SK-N-SH (cell line): ENCODE measurements at regions of chr19 and their contacts with region 1.

Region 1: DNA sequence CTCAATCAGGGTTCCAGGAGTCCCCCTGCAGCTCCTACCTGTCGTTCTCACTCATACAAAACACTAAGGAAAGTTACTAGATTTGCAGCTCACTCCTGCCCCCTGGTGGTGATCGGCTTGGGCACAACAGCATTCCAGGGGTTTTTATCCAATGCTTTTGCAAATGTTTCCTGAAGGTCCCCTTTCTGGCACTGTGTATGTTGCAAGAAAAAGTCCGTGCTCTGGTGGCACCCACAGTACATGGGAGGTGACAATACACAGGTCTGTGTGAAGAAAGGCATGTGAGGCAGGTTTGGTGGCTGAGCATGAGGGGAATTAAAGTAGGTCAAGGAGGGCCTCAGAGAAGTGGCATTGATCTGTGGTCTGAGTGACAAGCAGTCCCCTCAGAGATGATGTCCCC is 8.6 kb upstream of the TYK2 start:
- DNase-seq: peak; percentile 76
- H3K4me3 ChIP-seq: peak overlapping the region in 1 of 2 experiments; percentile 36; a peak in 1 of 4 replicates
- H3K27ac ChIP-seq: no peak overlapping the region
- H3K4me1 ChIP-seq: no peaks in the 10 kb centered on the region
- H3K27me3 ChIP-seq: no peaks in the 10 kb centered on the region
- CTCF ChIP-seq: peak; percentile 96
- EP300 ChIP-seq: no peak
- RAD21 ChIP-seq: peak; percentile 84

Region 2: DNA sequence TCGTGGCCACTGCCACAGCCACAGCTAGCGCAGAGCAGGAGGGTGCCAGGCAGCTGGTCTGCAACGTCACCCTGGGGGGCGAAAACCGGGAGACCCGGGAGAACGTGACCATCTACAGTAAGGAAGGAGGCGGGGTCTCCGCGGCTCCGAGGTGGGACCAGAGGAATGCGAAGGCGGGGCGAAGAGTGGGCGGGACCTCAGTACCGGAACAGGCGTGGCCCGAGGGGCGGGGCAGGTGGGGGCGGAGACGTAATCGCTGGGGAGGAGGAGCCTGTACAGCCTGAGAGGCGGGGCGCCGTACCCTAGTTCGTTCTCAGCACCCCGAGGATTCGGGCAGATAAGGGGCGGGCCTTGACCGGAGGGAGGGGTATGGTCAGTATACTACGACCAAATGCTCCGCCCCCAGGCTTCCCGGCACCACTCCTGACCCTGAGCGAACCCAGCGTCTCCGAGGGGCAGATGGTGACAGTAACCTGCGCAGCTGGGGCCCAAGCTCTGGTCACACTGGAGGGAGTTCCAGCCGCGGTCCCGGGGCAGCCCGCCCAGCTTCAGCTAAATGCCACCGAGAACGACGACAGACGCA is 96.7 kb before region 1 on chr19:
- CTCF ChIA-PET with region 1: interaction called, 33 read pairs
- POLR2A ChIA-PET with region 1: no interaction called
- DNase-seq: peak; percentile 92
- H3K4me3 ChIP-seq: peak overlapping the region; percentile 45 to 77
- H3K27ac ChIP-seq: no peak overlapping the region
- H3K4me1 ChIP-seq: peaks cover 0 to 39% of the 10 kb centered on the region in 2 experiments; a peak in 1 of 4 replicates
- H3K27me3 ChIP-seq: no peaks in the 10 kb centered on the region; the same call in 1 of the 2 replicates
- CTCF ChIP-seq: no peak
- EP300 ChIP-seq: no peak
- RAD21 ChIP-seq: no peak

Region 3: DNA sequence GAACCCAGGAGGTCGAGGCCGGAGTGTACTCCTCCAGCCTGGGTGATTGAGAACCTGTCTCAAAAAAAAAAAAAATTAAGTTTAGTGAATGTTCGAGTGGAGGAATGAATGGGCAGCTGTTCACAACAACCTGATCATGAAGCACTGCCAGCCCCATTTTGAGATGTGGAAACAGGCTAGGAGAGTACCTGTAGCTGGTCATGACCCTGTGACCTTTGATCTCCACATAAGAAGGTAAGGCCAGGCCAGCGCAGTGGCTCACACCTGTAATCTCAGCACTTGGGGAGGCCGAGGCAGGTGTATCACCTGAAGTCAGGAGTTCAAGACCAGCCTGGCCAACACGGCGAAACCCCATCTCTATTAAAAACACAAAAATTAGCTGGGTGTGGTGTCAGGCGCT is 63.2 kb before region 1 on chr19:
- CTCF ChIA-PET with region 1: interaction called, 10 read pairs
- POLR2A ChIA-PET with region 1: interaction called, 3 read pairs
- DNase-seq: no peak
- H3K4me3 ChIP-seq: no peak overlapping the region
- H3K27ac ChIP-seq: no peak overlapping the region
- H3K4me1 ChIP-seq: no peaks in the 10 kb centered on the region
- H3K27me3 ChIP-seq: no peaks in the 10 kb centered on the region
- CTCF ChIP-seq: no peak
- EP300 ChIP-seq: no peak
- RAD21 ChIP-seq: no peak

Region 4: GRCh38 chr19:10372690-10373089 is 16.3 kb before region 1 on chr19:
- CTCF ChIA-PET with region 1: interaction called, 12 read pairs
- POLR2A ChIA-PET with region 1: no interaction called
- DNase-seq: no peak
- H3K4me3 ChIP-seq: no peak overlapping the region
- H3K27ac ChIP-seq: no peak overlapping the region
- H3K4me1 ChIP-seq: no peaks in the 10 kb centered on the region
- H3K27me3 ChIP-seq: no peaks in the 10 kb centered on the region
- CTCF ChIP-seq: no peak
- EP300 ChIP-seq: no peak
- RAD21 ChIP-seq: no peak